Activated CD8-positive, alpha-beta memory T cell treated with anti-CD3 and anti-CD28 coated beads, Interleukin-2, amount 10 ng/mL, durations not matched to agents 7 days and 5 days (primary cell): ENCODE measurements at regions of chr5 and their contacts with region 1.

Region 1: GRCh38 chr5:140362860-140363630 is 3.1 kb downstream of the SLC4A9 start:
- DNase-seq: peak; percentile 88
- ATAC-seq: peak; percentile 92
- H3K4me3 Mint-ChIP-seq: peak overlapping the region; percentile 66
- H3K27ac Mint-ChIP-seq: no peak overlapping the region
- H3K4me1 Mint-ChIP-seq: peaks cover 9% of the 10 kb centered on the region
- H3K27me3 Mint-ChIP-seq: no peaks in the 10 kb centered on the region

Region 2: GRCh38 chr5:140244525-140245025 is 118.5 kb before region 1 on chr5:
- CTCF ChIA-PET with region 1: interaction called, 50 read pairs
- DNase-seq: peak; percentile 86
- ATAC-seq: peak; percentile 71
- H3K4me3 Mint-ChIP-seq: no peak overlapping the region
- H3K27ac Mint-ChIP-seq: no peak overlapping the region
- H3K4me1 Mint-ChIP-seq: peaks cover 39% of the 10 kb centered on the region
- H3K27me3 Mint-ChIP-seq: no peaks in the 10 kb centered on the region

Region 3: GRCh38 chr5:140346348-140347101 is 16.5 kb before region 1 on chr5 and contains the start of gene HBEGF:
- CTCF ChIA-PET with region 1: interaction called, 21 read pairs
- DNase-seq: peak; percentile 60
- ATAC-seq: peak; percentile 72
- H3K4me3 Mint-ChIP-seq: peak within 1 kb of the TSS; percentile 80
- H3K27ac Mint-ChIP-seq: peak within 1 kb of the TSS; percentile 68
- H3K4me1 Mint-ChIP-seq: peaks cover 59% of the 10 kb centered on the region
- H3K27me3 Mint-ChIP-seq: peaks cover 15% of the 10 kb centered on the region
- total RNA-seq, gene HBEGF: 10.7 to 13.5 TPM

Region 4: DNA sequence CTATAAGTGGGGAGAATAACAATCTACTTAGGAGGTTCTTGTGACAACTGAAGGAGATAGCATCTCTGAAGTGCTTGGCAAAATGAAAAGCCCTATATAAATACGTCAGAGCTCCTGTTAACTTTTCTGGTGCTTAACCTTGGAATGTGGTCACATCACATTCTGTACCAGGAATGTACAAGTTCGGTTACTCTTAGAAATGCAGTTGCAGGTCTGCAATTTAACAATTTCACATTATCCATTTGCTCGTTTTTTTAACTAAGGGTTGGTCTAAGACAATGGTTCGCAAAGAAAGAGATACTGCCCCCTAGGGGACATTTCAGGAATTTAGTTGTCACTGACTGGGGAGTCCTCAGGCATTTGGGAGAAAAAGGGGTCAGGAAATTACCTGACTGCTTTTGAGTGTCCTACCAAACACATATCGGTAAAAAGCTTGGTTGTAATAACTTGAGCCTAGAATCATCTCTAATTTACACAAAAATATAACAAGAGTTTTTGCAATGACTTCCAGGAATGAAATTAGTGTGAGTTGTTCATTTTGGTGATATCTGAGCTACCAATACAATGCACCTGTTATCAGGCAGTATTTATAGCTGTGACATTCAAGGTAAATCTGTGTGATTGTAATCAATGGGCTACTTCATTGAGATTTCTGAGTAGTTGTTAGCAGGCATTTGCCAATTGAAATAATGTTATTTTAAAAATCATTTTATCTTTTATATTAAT is 11.3 kb before region 1 on chr5:
- CTCF ChIA-PET with region 1: interaction called, 21 read pairs
- DNase-seq: peak; percentile 68
- ATAC-seq: peak; percentile 91
- H3K4me3 Mint-ChIP-seq: no peak overlapping the region
- H3K27ac Mint-ChIP-seq: no peak overlapping the region
- H3K4me1 Mint-ChIP-seq: peaks cover 28% of the 10 kb centered on the region
- H3K27me3 Mint-ChIP-seq: peaks cover 19% of the 10 kb centered on the region

Region 5: GRCh38 chr5:140401362-140402257 is 38.6 kb after region 1 on chr5 and contains the start of gene ANKHD1:
- CTCF ChIA-PET with region 1: interaction called, 13 read pairs
- DNase-seq: peak; percentile 99
- ATAC-seq: peak; percentile 85
- H3K4me3 Mint-ChIP-seq: no peak within 1 kb of the TSS
- H3K27ac Mint-ChIP-seq: no peak within 1 kb of the TSS
- H3K4me1 Mint-ChIP-seq: peaks cover 36% of the 10 kb centered on the region
- H3K27me3 Mint-ChIP-seq: no peaks in the 10 kb centered on the region
- total RNA-seq, gene ANKHD1: 111 to 124 TPM

Region 6: GRCh38 chr5:140418862-140419520 is 55.9 kb after region 1 on chr5:
- CTCF ChIA-PET with region 1: no interaction called
- DNase-seq: no peak
- ATAC-seq: no peak
- H3K4me3 Mint-ChIP-seq: no peak overlapping the region
- H3K27ac Mint-ChIP-seq: no peak overlapping the region
- H3K4me1 Mint-ChIP-seq: peaks cover 31% of the 10 kb centered on the region
- H3K27me3 Mint-ChIP-seq: no peaks in the 10 kb centered on the region

Region 7: DNA sequence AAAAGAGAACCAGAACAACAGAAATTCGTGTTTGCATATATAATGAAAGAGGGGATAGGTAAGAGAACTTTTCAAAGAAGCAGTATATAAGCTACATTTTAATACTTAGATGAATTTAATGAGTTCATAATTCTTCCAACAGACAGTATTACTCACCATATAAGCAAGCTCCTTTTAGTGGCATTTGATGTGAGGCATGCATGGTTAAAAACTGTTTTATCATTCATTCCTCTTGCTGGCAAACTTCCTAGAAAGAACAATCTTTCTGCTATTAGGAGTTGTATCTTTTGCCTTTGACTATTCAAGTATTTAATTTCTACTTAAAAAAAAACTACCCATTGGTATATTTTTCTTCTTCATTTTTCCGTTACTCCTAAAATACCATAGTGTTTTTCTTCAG is 118.7 kb after region 1 on chr5:
- CTCF ChIA-PET with region 1: no interaction called
- DNase-seq: no peak
- ATAC-seq: no peak
- H3K4me3 Mint-ChIP-seq: no peak overlapping the region
- H3K27ac Mint-ChIP-seq: no peak overlapping the region
- H3K4me1 Mint-ChIP-seq: no peaks in the 10 kb centered on the region
- H3K27me3 Mint-ChIP-seq: no peaks in the 10 kb centered on the region

Region 8: DNA sequence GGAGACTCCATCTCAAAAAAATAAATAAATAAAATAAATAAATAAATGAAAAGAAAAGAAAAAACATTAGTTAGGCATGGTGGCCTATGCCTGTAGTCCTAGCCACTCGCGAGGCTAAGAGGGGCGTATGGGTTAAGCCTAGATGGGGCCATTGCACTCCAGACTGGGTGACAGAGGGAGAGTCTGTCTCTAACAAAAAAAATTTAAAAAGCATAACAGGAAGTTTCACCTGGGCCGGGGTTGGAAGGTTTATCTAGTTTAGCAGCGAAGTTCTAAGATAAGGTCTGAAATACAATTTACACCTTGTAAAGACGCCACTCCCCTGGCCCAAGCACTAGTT is 355.2 kb after region 1 on chr5:
- CTCF ChIA-PET with region 1: interaction called, 49 read pairs
- DNase-seq: no peak
- ATAC-seq: no peak
- H3K4me3 Mint-ChIP-seq: no peak overlapping the region
- H3K27ac Mint-ChIP-seq: no peak overlapping the region
- H3K4me1 Mint-ChIP-seq: peaks cover 17% of the 10 kb centered on the region
- H3K27me3 Mint-ChIP-seq: peaks cover 9% of the 10 kb centered on the region